Caco-2 (cell line): ENCODE measurements at regions of chr1 and their contacts with region 1.

Region 1: DNA sequence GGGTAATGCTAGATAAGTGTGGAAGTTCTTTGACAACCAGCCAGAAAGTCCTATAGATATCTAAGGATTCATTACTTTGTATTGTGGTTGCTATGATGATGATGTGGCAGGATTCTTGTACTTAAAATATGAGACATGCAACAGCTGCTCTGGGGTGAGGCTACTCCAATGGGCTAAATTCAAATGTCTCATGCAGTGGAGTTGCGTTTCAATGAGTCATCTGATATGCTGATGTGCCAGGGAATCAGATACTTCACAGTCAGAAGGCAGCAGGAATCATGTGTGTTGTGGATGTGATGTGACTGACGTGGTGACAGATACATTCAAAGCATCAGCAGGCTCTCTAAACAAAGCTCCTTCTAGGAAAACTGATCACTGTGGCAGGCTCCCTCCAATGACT is 66.5 kb downstream of the TSEN15 start:
- DNase-seq: no peak
- H3K4me3 ChIP-seq: no peak overlapping the region
- H3K4me3 Mint-ChIP-seq: no peak overlapping the region
- H3K27ac Mint-ChIP-seq: no peak overlapping the region
- H3K4me1 ChIP-seq: no peaks in the 10 kb centered on the region
- H3K4me1 Mint-ChIP-seq: no peaks in the 10 kb centered on the region
- H3K27me3 ChIP-seq: no peaks in the 10 kb centered on the region
- H3K27me3 Mint-ChIP-seq: no peaks in the 10 kb centered on the region
- CTCF ChIP-seq: no peak

Region 2: DNA sequence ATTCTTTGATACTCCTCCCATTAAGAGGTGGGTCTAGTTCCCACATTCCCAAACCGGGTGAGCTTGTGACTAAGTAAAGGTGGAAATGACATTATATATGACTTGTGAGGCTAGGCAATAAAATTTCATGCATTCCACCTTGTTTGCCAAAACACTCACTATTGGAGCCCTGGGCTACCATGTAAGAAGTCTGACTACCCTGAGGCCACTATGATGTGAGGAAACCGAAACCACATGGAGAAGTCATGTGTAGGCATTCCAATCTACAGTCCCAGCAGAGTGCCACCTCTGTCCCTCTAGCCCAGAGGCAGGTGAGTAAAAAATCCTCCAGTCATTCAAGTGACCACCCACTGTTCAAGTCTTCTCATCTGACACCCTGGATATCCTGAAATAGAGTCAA is 663.7 kb before region 1 on chr1:
- CTCF ChIA-PET with region 1: interaction called, 10 read pairs
- POLR2A ChIA-PET with region 1: no interaction called
- intact Hi-C with region 1: no loop called
- DNase-seq: peak; percentile 28 to 61
- H3K4me3 ChIP-seq: no peak overlapping the region
- H3K4me3 Mint-ChIP-seq: no peak overlapping the region
- H3K27ac Mint-ChIP-seq: no peak overlapping the region
- H3K4me1 ChIP-seq: 0 out of 2 replicates have a peak, but pooled peaks cover 6% of the 10 kb centered on the region
- H3K4me1 Mint-ChIP-seq: no peaks in the 10 kb centered on the region
- H3K27me3 ChIP-seq: no peaks in the 10 kb centered on the region
- H3K27me3 Mint-ChIP-seq: no peaks in the 10 kb centered on the region
- CTCF ChIP-seq: no peak

Region 3: DNA sequence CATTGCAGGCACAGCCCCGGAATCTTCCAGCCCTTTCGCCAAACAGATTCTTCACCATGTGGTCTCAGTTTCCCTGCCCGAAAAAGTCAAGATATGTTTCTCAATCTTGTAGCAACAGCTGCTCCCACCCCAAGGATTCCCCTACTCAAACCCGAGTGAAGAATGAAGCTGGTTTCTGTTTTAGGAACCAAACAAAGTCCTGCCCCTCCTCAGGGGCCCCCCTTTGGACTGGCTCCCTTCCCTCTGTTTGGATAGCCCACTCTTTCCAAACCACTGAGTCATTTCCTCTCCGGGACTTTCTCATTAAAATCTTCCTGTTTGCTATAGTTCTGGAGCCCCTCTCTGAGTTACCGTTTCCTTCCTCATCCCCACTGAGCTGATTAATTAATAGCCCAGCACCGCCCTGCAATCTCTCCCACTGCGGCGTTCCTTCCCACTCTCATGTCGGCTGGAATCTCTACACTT is 34.4 kb after region 1 on chr1:
- CTCF ChIA-PET with region 1: no interaction called
- POLR2A ChIA-PET with region 1: no interaction called
- intact Hi-C with region 1: no loop called
- DNase-seq: no peak
- H3K4me3 ChIP-seq: 0 out of 2 replicates have a peak overlapping the region, but pooled peaks have one; percentile 4
- H3K4me3 Mint-ChIP-seq: peak overlapping the region; percentile 54
- H3K27ac Mint-ChIP-seq: no peak overlapping the region
- H3K4me1 ChIP-seq: no peaks in the 10 kb centered on the region
- H3K4me1 Mint-ChIP-seq: peaks cover 8% of the 10 kb centered on the region
- H3K27me3 ChIP-seq: no peaks in the 10 kb centered on the region
- H3K27me3 Mint-ChIP-seq: peaks cover 5% of the 10 kb centered on the region
- CTCF ChIP-seq: no peak